Esophagus muscularis mucosa (tissue), 4 donors: ENCODE measurements at regions of chr1 and their contacts with region 1.

Region 1: DNA sequence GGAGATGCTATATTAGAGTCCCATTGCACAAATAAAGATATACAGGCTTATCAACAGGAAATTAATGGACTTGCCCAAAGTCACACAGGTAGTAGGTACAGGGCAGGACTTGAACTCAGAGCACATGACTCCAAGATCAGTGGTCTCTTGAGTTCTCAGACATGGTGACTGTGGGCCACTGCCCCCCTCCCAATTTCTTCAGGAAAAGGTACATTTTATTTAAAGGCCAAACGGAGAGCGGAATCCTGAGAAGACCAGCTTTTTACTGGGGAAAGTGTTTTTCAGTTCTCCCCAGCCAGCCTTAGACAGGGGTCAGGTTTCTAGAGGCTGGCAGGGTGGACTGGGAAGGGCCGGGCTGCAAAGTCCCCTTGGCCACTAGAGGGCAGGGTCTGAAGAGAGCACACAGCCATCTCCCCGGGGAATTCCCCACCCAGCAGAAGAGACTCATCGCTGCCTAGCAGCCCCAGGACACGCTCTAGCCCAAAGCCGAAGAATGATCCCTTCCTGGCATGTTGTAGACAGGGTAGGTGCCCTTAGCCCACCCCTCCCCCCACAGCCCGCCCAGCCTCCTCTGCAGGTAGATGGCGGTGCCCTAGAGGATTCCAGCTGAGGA is 29.7 kb downstream of the ACP6 start:
- DNase-seq: no peak
- H3K4me3 ChIP-seq: no peak overlapping the region
- H3K27ac ChIP-seq: no peak overlapping the region
- H3K4me1 ChIP-seq: peaks cover 7 to 16% (median 12%) of the 10 kb centered on the region in 4 donors
- H3K27me3 ChIP-seq: no peaks in the 10 kb centered on the region
- CTCF ChIP-seq: peak; percentile 65 to 82 (median 70)
- EP300 ChIP-seq: no peak
- POLR2A ChIP-seq: no peak

Region 2: GRCh38 chr1:147699686-147700041 is 59.0 kb after region 1 on chr1:
- intact Hi-C with region 1: loop called (anchors 10 kb)
- DNase-seq: no peak
- H3K4me3 ChIP-seq: no peak overlapping the region
- H3K27ac ChIP-seq: no peak overlapping the region
- H3K4me1 ChIP-seq: peaks cover 0 to 8% (median 2%) of the 10 kb centered on the region in 4 donors
- H3K27me3 ChIP-seq: peaks cover 0 to 4% (median 0%) of the 10 kb centered on the region in 4 donors
- CTCF ChIP-seq: no peak
- EP300 ChIP-seq: no peak
- POLR2A ChIP-seq: no peak

Region 3: GRCh38 chr1:147824798-147825197 is 184.1 kb after region 1 on chr1:
- intact Hi-C with region 1: no loop called
- DNase-seq: no peak
- H3K4me3 ChIP-seq: no peak overlapping the region
- H3K27ac ChIP-seq: no peak overlapping the region
- H3K4me1 ChIP-seq: peaks cover 12 to 28% (median 20%) of the 10 kb centered on the region in 4 donors
- H3K27me3 ChIP-seq: no peaks in the 10 kb centered on the region
- CTCF ChIP-seq: no peak
- EP300 ChIP-seq: no peak
- POLR2A ChIP-seq: no peak

Region 4: DNA sequence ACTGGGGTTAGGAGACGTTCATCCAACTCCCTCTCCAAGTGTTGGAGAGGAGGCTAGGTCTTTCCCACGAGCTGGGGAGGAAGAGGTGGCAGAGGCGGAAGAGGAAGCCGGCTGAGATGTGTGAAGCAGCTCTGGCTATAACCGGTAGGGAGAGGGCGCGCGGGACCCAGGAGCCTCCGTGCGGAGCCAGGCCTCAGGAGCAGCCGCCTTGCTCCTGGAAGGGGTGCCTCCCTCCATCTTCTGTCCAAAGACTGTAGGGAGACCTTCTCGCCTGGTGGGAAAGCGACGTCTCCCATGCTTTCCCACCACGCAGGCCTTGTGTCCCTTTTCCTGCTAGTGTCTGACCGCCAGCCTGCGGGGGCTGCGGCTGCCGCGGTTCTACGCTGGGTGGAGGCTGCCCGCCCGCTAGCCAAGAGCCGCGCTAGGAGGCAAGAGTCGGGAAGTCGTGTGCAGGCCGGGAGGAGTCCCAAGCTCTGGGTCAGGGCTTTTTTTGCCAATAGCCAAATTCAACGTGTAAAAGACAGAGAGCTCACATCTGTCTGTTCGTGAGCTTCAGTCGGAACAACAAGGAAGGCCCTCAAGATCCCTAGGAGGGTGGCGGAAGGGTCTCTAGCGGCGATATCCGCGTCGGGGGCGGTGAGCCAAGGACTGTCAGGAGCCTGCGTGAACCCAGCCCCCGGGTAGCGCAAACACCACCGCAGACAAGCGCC is 519.8 kb after region 1 on chr1:
- intact Hi-C with region 1: no loop called
- DNase-seq: no peak
- H3K4me3 ChIP-seq: peak overlapping the region in 2 of 4 donors; percentile 9 to 12
- H3K27ac ChIP-seq: no peak overlapping the region
- H3K4me1 ChIP-seq: peaks cover 0 to 13% (median 2%) of the 10 kb centered on the region in 4 donors
- H3K27me3 ChIP-seq: peaks cover 0 to 56% (median 17%) of the 10 kb centered on the region in 4 donors
- CTCF ChIP-seq: no peak
- EP300 ChIP-seq: no peak
- POLR2A ChIP-seq: no peak